ENCODE measurements at regions of chr7 and their contacts with region 1.

Region 1: GRCh38 chr7:100563809-100564400 is 9.8 kb downstream of the SAP25 start:
- DNase-seq: no peak
- H3K4me3 ChIP-seq: no peak overlapping the region
- H3K27ac ChIP-seq: no peak overlapping the region
- H3K27me3 ChIP-seq: no peaks in the 10 kb centered on the region
- CTCF ChIP-seq: peak; percentile 97

Region 2: DNA sequence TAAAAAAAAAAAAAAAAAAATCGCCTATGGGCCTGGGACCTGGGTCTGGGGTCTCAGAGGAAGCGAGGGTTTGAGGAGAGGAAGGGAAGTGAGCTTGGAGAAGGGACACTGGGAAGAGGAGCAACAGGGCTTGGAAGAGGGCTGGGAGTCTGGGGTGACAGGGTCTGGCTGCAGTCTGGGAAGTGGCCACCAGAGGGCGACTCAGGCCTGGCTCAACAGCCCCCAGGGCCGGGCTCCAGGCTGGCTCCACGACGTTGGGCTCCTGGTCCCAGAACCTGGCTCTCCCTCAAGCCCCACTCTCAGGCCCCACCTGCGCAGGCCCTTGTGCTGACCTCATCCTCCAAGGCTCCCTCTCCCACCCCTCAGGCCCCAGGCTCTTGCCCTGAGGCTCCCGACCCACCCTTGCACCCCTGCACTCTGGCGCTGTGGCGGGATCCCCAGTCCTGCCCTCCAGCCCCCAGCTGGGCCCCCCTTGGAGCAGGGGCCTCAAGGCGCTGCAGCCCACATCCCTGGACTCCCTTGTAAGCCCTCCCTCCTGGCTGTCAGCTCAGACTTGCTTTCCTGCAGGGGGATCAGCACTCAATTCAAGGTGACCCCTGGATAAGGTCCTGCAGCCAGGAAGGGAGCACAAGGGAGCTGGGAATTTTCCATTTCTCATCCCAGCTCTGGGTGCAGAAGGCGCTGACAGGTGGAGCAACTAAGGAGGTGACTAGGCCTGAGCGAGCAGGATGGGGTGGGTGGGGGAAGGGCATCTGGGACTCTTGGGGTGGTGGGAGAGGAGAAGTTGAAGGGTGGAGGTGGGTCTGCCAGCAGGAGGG is 94.5 kb before region 1 on chr7:
- CTCF ChIA-PET with region 1: interaction called, 80 read pairs
- POLR2A ChIA-PET with region 1: interaction called, 3 read pairs
- DNase-seq: no peak
- H3K4me3 ChIP-seq: no peak overlapping the region
- H3K27ac ChIP-seq: no peak overlapping the region
- H3K27me3 ChIP-seq: no peaks in the 10 kb centered on the region
- CTCF ChIP-seq: peak; percentile 90

Region 3: DNA sequence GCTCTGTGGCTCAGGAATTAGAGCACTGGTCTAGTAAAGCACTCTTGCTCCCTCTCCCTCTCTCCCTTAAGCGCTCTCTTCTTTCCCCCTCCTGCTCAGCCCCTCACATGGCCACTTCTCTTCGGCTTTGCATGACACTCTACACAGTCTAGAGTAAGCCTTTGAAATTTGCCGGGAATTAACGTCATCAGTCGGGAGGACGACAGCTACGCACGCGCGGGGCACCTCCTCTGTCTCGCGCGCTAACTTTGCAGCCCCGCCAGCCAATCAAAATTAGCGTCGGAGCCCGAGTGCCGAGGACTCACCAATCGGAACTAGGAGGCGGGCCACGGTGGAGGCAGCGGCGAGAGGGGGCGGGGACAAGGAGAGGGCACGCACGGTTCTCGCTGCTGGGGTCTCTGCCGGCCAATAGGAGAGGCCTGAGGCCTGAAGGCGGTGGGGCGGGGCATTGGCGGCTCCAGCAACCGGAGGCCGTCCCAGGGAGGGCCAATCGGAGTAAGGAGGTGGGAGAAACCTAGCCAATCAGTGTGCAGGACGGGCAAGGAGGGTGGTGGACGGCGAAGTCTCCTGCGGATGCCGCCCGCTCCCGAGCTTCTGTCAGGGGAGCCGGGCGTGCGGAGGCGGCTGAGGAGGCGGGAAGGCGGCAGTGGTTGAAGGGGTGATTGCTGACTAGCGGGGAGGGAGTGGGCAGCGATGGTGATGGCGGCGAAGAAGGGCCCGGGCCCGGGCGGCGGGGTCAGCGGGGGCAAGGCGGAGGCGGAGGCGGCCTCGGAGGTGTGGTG is 25.1 kb before region 1 on chr7 and contains the start of gene AGFG2:
- CTCF ChIA-PET with region 1: interaction called, 72 read pairs
- POLR2A ChIA-PET with region 1: no interaction called
- DNase-seq: peak; percentile 99
- H3K4me3 ChIP-seq: peak within 1 kb of the TSS; percentile 81
- H3K27ac ChIP-seq: peak within 1 kb of the TSS; percentile 31
- H3K27me3 ChIP-seq: peaks cover 6% of the 10 kb centered on the region
- CTCF ChIP-seq: no peak
- polyA plus RNA-seq, gene AGFG2: 5.7 and 6.4 TPM in 2 replicates

Region 4: GRCh38 chr7:100545360-100546128 is 18.4 kb before region 1 on chr7:
- CTCF ChIA-PET with region 1: interaction called, 72 read pairs
- POLR2A ChIA-PET with region 1: interaction called, 5 read pairs
- DNase-seq: peak; percentile 53
- H3K4me3 ChIP-seq: no peak overlapping the region
- H3K27ac ChIP-seq: peak overlapping the region; percentile 81
- H3K27me3 ChIP-seq: no peaks in the 10 kb centered on the region
- CTCF ChIP-seq: peak; percentile 29; the same call in 1 of the 2 replicates

Region 5: DNA sequence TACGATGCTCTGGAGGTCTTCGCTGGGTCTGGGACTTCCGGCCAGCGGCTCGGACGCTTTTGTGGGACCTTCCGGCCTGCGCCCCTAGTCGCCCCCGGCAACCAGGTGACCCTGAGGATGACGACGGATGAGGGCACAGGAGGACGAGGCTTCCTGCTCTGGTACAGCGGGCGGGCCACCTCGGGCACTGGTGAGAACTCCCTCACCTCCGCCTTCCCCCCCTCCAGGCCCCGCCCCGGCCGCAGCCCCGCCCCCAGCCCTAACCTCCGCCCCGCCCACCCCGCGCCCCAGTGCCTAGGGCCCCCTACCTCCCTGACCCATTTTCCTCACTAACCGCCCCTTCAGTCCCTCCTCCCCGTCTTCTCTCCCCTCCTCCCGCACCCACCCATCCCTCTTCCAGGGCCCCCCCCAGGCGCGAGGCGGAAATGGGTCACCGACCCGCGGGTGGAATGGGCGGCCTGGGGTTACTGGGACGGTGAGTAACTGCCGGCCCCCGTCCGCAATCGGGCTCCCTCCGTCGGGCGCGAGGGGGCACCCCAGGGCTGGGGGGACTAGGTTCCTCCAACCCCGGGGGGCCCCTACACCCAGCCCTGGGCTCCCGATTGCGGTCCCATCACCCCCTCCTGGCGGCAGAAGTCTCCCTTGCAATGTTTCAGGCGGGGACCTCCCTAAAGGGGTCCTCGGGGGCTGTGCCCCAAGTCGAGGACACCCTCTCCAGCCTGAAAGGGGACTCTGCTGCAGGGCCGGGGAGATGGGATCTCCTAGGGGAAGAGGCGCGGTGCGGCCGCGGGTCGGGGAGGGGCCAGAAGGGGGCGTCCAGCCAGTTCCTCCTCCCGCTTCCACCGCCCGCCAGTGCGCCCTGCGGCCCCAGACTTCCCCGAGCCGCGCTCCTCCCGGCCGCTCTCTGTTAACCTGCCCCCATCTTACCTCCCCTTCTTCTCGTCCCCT is 40.4 kb after region 1 on chr7:
- CTCF ChIA-PET with region 1: interaction called, 12 read pairs
- POLR2A ChIA-PET with region 1: no interaction called
- DNase-seq: no peak
- H3K4me3 ChIP-seq: peak overlapping the region; percentile 94
- H3K27ac ChIP-seq: peak overlapping the region; percentile 77
- H3K27me3 ChIP-seq: no peaks in the 10 kb centered on the region
- CTCF ChIP-seq: peak; percentile 46

Region 6: GRCh38 chr7:100655908-100656674 is 92.2 kb after region 1 on chr7 and contains the start of gene ACTL6B:
- CTCF ChIA-PET with region 1: no interaction called
- POLR2A ChIA-PET with region 1: no interaction called
- DNase-seq: no peak
- H3K4me3 ChIP-seq: no peak within 1 kb of the TSS
- H3K27ac ChIP-seq: no peak within 1 kb of the TSS
- H3K27me3 ChIP-seq: peaks cover 23% of the 10 kb centered on the region
- CTCF ChIP-seq: no peak
- polyA plus RNA-seq, gene ACTL6B: not detected in 2 replicates

Region 7: GRCh38 chr7:100691676-100692577 is 128.0 kb after region 1 on chr7:
- CTCF ChIA-PET with region 1: interaction called, 30 read pairs
- POLR2A ChIA-PET with region 1: no interaction called
- DNase-seq: no peak
- H3K4me3 ChIP-seq: peak overlapping the region; percentile 80
- H3K27ac ChIP-seq: no peak overlapping the region
- H3K27me3 ChIP-seq: peaks cover 2% of the 10 kb centered on the region
- CTCF ChIP-seq: peak; percentile 90

Measured in AG04450 (cell line).